Endothelial cell of umbilical vein (primary cell): ENCODE measurements at regions of chr22 and their contacts with region 1.

Region 1: GRCh38 chr22:41746567-41747400 is 47.5 kb downstream of the MEI1 start:
- DNase-seq: peak; percentile 79
- H3K4me3 ChIP-seq: no peak overlapping the region
- H3K27ac ChIP-seq: no peak overlapping the region
- H3K4me1 ChIP-seq: no peaks in the 10 kb centered on the region
- H3K27me3 ChIP-seq: peaks cover 16 to 19% of the 10 kb centered on the region in 2 experiments
- CTCF ChIP-seq: peak; percentile 83 to 89
- POLR2A ChIP-seq: no peak

Region 2: DNA sequence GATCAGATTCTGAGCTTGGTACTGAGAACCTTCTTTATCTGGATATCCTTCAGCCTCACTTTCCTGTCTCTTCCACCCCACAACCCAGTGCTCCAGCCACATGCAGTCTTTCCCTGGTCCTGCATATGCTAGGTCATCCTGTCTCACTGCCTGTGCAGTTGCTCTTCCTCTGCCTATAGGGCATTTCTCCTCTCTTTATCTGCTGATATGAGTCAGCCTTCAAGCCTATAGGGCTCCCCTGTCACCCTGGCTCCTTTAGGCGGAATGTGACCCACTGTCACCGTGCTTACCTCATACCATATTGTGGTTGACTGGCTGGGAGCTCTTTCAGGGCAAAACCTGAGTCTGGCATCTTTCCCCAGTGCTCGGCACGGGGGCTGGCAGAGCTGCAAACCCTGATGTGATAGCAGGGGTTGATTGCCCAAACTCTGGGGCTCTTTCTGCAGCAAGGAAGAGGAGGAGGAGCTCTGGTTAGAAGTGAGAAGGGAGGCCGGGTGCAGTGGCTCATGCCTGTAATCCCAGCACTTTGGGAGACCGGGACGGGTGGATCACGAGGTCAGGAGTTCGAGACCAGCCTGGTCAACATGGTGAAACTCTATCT is 21.2 kb before region 1 on chr22:
- CTCF ChIA-PET with region 1: interaction called, 18 read pairs
- POLR2A ChIA-PET with region 1: no interaction called
- dilution Hi-C with region 1: no loop called
- intact Hi-C with region 1: no loop called
- DNase-seq: no peak
- H3K4me3 ChIP-seq: no peak overlapping the region
- H3K27ac ChIP-seq: no peak overlapping the region
- H3K4me1 ChIP-seq: no peaks in the 10 kb centered on the region
- H3K27me3 ChIP-seq: peaks cover 1 to 5% of the 10 kb centered on the region in 2 experiments
- CTCF ChIP-seq: no peak
- POLR2A ChIP-seq: no peak

Region 3: DNA sequence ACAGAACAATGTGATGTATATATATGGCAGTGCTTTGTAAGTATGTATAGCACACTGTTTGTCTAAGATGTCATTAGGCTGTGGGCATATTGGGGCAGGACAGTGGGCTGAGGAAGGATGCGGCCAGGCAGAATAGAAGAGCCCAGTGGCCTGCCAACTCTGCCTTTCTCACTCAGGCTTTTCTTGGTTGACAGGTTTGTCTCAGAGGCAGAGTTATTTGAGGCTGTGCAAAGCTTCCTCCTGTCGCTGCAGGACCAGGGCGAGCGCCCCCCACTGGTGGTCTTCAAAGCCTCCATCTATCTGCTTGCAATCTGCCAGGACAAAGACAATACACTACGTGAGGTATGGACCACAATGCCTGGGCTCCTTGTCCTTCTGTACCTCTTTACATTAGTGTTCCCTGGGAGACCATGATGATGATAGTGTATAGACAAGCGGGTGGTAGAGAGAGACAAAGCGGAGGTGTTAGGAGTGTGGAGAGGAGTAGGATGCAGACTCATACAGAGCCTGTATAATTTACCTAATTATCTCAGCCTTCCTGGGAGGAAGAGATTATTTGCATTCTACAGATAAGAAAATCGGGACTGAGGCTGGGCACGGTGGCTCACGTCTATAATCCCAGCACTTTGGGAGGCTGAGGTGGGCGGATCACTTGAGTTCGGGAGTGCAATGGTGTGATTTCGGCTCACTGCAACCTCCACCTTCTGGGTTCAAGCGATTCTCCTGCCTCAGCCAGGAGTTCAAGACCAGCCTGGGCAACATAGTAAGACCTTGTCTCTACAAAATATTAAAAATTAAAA is 16.4 kb after region 1 on chr22:
- CTCF ChIA-PET with region 1: interaction called, 23 read pairs
- POLR2A ChIA-PET with region 1: no interaction called
- dilution Hi-C with region 1: no loop called
- intact Hi-C with region 1: no loop called
- DNase-seq: peak; percentile 16
- H3K4me3 ChIP-seq: no peak overlapping the region
- H3K27ac ChIP-seq: no peak overlapping the region
- H3K4me1 ChIP-seq: peaks cover under 1% of the 10 kb centered on the region
- H3K27me3 ChIP-seq: peaks cover 0 to 3% of the 10 kb centered on the region in 2 experiments
- CTCF ChIP-seq: peak; percentile 31 to 49
- POLR2A ChIP-seq: no peak

Region 4: DNA sequence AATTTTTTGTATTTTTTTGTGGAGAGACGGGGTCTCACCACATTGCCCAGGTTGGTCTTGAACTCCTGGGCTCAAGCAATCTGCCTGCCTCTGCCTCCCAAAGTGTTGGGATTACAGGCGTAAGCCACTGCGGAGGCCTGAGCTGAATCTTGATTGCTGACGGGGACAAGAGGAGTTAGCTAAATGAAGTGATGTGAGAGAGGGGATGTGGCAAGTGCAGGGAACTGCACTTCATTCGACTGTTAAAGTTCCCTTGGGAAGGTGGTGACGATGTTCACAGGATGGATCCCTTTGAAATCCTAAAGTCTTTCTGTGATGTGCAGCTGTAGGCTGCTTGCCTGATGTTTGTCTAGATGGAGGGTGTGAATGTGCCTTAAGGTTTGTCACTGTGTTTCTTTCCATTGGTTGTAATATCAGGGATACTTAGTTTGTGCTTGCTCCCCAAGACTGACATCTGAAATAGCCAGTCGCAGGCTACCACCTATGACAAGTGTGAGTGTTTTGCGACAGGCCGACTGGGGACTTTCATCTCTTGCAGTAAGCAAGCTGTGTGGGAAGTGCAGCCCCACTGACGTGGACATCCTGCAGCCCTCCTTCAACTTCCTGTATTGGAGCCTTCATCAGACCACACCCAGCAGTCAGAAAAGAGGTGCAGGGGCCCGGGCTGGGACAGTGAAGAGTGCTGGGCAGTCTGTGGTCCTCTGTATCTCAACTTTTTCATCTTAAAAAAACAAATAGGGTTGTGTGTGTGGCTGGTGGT is 34.1 kb after region 1 on chr22:
- CTCF ChIA-PET with region 1: interaction called, 24 read pairs
- POLR2A ChIA-PET with region 1: no interaction called
- dilution Hi-C with region 1: no loop called
- intact Hi-C with region 1: no loop called
- DNase-seq: peak; percentile 49
- H3K4me3 ChIP-seq: no peak overlapping the region
- H3K27ac ChIP-seq: no peak overlapping the region
- H3K4me1 ChIP-seq: peaks cover 10% of the 10 kb centered on the region
- H3K27me3 ChIP-seq: no peaks in the 10 kb centered on the region
- CTCF ChIP-seq: no peak
- POLR2A ChIP-seq: no peak

Region 5: GRCh38 chr22:41800348-41801146 is 53.8 kb after region 1 on chr22 and contains the start of gene CCDC134:
- CTCF ChIA-PET with region 1: interaction called, 51 read pairs
- POLR2A ChIA-PET with region 1: no interaction called
- dilution Hi-C with region 1: no loop called
- intact Hi-C with region 1: no loop called
- DNase-seq: peak; percentile 84
- H3K4me3 ChIP-seq: peak within 1 kb of the TSS; percentile 62 to 83 (median 78)
- H3K27ac ChIP-seq: peak within 1 kb of the TSS; percentile 21
- H3K4me1 ChIP-seq: peaks cover 16% of the 10 kb centered on the region
- H3K27me3 ChIP-seq: no peaks in the 10 kb centered on the region
- CTCF ChIP-seq: no peak
- POLR2A ChIP-seq: peak; percentile 93
- total RNA-seq, gene CCDC134: 8.1 and 8.4 TPM in 2 replicates

Region 6: GRCh38 chr22:41841085-41841659 is 94.4 kb after region 1 on chr22:
- CTCF ChIA-PET with region 1: interaction called, 12 read pairs
- POLR2A ChIA-PET with region 1: no interaction called
- dilution Hi-C with region 1: no loop called
- intact Hi-C with region 1: no loop called
- DNase-seq: no peak
- H3K4me3 ChIP-seq: no peak overlapping the region
- H3K27ac ChIP-seq: no peak overlapping the region
- H3K4me1 ChIP-seq: peaks cover 7% of the 10 kb centered on the region
- H3K27me3 ChIP-seq: no peaks in the 10 kb centered on the region
- CTCF ChIP-seq: no peak
- POLR2A ChIP-seq: no peak

Region 7: DNA sequence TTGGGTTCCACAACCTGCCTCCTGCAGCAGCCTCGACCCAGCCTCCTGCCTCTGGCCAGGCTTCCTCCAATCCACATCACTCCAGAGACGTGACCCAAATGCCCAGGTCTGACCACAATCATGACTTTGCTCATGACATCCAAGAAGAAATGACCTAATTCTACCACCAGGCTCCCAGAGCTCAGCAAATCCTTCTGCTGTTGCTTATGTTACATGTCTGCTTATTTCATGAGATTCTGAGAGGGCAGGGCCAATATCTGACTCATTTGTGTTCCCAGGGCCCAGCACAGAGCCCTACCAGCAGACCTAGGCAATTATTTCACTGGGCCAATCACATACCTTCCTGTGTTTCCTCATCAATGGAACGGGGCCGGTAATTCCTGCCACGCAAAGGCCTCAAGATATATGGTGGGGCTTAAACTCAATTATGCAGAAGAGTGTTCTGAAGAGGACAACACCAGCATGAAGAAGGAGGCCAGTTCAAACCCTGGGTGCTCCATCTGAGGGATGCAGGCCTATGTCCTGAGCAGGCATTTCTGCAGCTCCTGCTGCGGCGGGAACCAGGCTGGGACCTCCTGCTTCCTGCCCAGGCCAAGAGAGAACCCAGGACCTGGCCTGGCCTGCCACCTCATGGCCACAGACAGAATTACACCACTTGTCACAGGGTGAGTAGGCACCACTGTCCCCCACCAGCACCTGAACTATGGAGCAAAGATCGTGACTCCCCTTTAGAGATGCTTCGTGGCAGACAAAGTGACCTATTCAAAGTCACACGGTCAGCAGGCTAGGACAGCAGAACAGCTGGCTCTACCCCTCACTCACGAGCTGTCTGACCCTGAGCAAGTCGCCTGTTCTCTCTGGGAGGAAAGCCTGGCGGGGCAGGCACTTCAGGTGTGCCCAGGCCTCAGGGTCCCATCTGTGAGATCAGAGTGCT is 194.3 kb after region 1 on chr22:
- CTCF ChIA-PET with region 1: interaction called, 81 read pairs
- POLR2A ChIA-PET with region 1: no interaction called
- dilution Hi-C with region 1: no loop called
- intact Hi-C with region 1: loop called (anchors 1 kb)
- DNase-seq: peak; percentile 75
- H3K4me3 ChIP-seq: no peak overlapping the region
- H3K27ac ChIP-seq: no peak overlapping the region
- H3K4me1 ChIP-seq: peaks cover 29% of the 10 kb centered on the region
- H3K27me3 ChIP-seq: no peaks in the 10 kb centered on the region
- CTCF ChIP-seq: peak; percentile 83 to 89
- POLR2A ChIP-seq: no peak